Caco-2 (cell line): ENCODE measurements at regions of chr1 and their contacts with region 1.

Region 1: DNA sequence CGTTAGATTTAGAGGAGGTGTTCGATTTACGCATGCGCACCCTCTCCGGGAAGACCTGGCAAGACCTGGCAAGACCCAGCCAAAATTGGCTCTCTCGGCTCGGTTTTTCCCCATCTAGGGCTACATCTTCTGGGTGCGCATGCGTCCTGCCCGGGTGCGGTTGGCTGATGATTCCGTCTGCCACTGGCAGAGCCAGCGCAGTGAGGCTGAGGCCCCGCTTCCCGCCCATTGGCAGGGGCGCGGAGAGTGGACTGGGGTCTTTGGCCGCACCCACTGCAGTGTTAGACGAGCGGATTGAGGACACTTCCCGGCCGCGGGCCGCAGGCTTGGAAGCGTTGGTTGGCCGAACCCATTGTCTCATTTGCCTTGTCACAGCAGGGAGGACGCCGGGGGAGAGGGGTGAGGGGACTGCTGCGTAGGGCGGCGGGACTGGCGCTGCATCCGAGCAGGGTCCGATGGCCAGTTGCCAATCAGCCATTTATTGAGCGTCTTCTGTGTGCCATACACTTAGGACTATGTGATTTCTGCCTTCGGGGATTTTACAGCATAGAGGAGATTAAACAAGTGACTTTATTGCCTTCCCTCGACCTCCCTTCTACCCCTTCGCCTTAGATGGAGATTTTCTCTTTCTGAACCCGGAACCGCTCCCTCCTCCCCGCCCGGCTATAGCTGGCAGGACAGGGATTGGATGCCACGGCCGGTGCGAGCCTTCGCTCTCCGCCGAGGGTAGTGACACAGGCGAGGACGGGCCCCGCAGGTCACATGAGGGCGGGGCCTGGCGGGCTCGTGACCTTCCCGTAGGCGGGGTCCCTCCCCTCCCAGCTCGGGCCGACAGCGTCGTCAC is 43.7 kb downstream of the MEF2D start:
- DNase-seq: peak; percentile 98
- H3K4me3 ChIP-seq: peak overlapping the region; percentile 70
- H3K4me3 Mint-ChIP-seq: peak overlapping the region; percentile 88
- H3K27ac Mint-ChIP-seq: peak overlapping the region; percentile 90
- H3K4me1 ChIP-seq: peaks cover 13% of the 10 kb centered on the region
- H3K4me1 Mint-ChIP-seq: peaks cover 1% of the 10 kb centered on the region
- H3K27me3 ChIP-seq: no peaks in the 10 kb centered on the region
- H3K27me3 Mint-ChIP-seq: no peaks in the 10 kb centered on the region
- CTCF ChIP-seq: no peak

Region 2: DNA sequence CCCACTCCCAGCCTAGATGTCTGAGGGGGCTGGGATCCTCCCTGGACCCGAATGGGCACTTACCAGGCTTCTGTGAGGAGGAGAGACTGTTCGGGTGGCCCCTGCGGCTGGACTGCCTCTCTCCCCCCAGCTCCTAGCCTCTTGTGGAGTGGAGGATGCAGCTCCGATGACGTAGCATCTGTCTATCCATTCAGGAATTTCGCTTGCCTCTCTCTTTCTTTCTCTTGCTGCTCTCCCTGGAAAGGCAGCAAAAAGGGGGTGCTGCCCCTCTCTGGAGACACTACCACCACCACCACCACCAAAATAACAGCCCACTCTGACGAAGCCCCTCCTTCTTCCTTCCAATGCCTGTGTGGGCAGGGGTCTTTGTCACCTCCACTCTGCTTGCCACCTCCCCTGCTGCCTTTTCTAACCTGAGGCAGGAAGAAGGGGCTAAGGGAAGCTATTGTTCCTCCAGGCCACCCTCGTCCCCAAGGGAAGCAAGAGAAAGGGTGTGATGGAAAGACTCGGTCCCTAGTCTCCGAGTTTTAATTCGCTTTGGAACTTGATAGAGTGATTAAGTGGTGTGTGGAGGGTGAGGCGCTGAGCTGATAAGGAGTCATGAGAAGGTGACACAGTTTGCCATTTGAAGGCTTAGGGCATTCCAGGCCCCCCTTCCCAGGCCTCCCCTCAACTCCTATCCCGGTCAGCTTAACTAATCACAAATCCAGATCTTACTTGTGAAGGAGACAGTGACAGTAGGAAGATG is 27.4 kb before region 1 on chr1:
- CTCF ChIA-PET with region 1: no interaction called
- POLR2A ChIA-PET with region 1: no interaction called
- intact Hi-C with region 1: no loop called
- DNase-seq: no peak
- H3K4me3 ChIP-seq: no peak overlapping the region
- H3K4me3 Mint-ChIP-seq: no peak overlapping the region
- H3K27ac Mint-ChIP-seq: no peak overlapping the region
- H3K4me1 ChIP-seq: no peaks in the 10 kb centered on the region
- H3K4me1 Mint-ChIP-seq: no peaks in the 10 kb centered on the region
- H3K27me3 ChIP-seq: peaks cover 2% of the 10 kb centered on the region; the same call in 1 of the 2 replicates
- H3K27me3 Mint-ChIP-seq: peaks cover 39% of the 10 kb centered on the region
- CTCF ChIP-seq: no peak

Region 3: GRCh38 chr1:156471496-156472490 is 14.9 kb after region 1 on chr1:
- CTCF ChIA-PET with region 1: interaction called, 9 read pairs
- POLR2A ChIA-PET with region 1: interaction called, 8 read pairs
- intact Hi-C with region 1: loop called (anchors 1 kb)
- DNase-seq: peak; percentile 49 to 53
- H3K4me3 ChIP-seq: no peak overlapping the region
- H3K4me3 Mint-ChIP-seq: no peak overlapping the region
- H3K27ac Mint-ChIP-seq: peak overlapping the region; percentile 69
- H3K4me1 ChIP-seq: peaks cover 8% of the 10 kb centered on the region
- H3K4me1 Mint-ChIP-seq: no peaks in the 10 kb centered on the region
- H3K27me3 ChIP-seq: no peaks in the 10 kb centered on the region
- H3K27me3 Mint-ChIP-seq: no peaks in the 10 kb centered on the region
- CTCF ChIP-seq: no peak

Region 4: DNA sequence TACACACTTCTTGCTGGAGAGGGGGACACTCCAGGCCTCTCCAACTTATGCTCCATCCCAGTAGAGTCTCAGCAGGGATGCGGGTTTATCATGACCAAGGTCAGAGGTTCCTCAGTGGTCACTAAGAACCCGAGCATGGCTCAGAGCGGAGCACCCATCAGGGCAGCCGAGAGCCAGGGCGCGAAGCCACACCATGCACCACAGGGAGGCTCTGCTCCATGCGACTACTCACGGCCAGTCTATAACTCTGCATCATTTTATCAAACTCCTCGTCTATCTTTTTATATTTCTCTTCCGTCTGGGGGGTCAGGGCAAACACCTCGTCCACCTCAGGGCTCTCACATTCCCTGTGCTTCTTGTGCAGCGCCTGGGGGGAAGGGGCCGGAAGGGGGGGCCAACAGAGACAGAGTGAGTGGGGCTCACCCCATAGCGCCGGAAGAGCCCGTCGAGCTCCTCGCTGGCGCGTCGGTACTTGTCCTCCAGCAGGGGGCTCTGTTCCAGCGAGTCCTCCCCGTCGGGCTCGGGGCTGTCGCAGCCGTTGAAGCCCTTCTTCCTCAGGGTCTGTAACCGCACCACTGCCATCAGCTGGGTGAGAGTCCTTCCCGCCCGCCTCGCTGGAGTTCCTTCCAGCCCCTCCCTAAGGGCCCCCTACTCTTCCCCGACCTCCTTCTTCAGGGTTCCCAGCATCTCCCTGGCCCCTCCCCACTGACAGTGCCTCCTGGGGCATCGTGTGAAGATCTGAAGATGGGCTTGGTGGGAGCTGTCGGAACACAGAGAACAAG is 23.8 kb after region 1 on chr1:
- CTCF ChIA-PET with region 1: interaction called, 9 read pairs
- POLR2A ChIA-PET with region 1: no interaction called
- intact Hi-C with region 1: loop called (anchors 2 kb)
- DNase-seq: peak in 1 of 2 experiments; percentile 52
- H3K4me3 ChIP-seq: no peak overlapping the region
- H3K4me3 Mint-ChIP-seq: no peak overlapping the region
- H3K27ac Mint-ChIP-seq: no peak overlapping the region
- H3K4me1 ChIP-seq: no peaks in the 10 kb centered on the region
- H3K4me1 Mint-ChIP-seq: no peaks in the 10 kb centered on the region
- H3K27me3 ChIP-seq: no peaks in the 10 kb centered on the region
- H3K27me3 Mint-ChIP-seq: no peaks in the 10 kb centered on the region
- CTCF ChIP-seq: peak; percentile 63 to 68

Region 5: DNA sequence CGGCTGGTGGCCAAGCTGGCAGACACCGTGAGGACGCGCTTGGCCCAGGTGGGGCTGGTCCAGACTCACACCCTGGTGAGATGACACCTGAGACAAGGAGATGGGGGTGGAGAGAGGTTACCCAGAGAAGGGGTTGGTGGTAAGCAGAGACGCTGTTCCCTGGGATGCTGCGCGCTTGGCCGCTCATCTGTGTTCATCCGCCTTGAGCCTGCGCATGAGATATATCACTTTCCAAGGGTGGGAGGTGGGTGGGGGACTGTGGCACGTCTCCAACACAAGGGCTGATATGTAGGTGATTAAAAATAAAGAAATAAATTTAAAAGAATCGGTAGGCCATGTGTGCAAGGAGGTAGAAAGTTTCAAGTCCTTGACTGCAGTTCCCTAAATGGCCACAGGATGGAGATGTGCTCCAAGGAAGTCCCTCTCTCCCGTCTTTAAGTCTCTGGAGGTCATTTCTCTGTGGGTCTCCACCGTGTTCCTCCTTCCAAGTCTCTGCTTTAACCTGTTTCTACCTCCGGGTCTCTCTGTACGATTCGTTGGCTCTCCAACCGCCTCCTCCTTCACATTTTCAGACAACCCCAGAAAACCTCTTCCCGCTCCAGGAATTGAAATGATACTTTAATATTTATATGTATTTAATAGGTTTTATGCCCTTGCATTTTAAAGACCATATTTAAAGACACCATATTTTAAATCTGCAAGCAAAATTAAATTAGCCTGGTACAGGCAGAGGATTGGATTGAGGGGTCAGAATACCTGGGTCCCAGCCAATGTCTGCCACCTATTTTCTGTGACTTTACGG is 127.2 kb after region 1 on chr1:
- CTCF ChIA-PET with region 1: interaction called, 4 read pairs
- POLR2A ChIA-PET with region 1: no interaction called
- intact Hi-C with region 1: loop called (anchors 5 kb)
- DNase-seq: peak; percentile 75 to 78
- H3K4me3 ChIP-seq: no peak overlapping the region
- H3K4me3 Mint-ChIP-seq: no peak overlapping the region
- H3K27ac Mint-ChIP-seq: no peak overlapping the region
- H3K4me1 ChIP-seq: no peaks in the 10 kb centered on the region
- H3K4me1 Mint-ChIP-seq: no peaks in the 10 kb centered on the region
- H3K27me3 ChIP-seq: no peaks in the 10 kb centered on the region
- H3K27me3 Mint-ChIP-seq: no peaks in the 10 kb centered on the region
- CTCF ChIP-seq: peak; percentile 83 to 89

Region 6: GRCh38 chr1:156608036-156608674 is 151.3 kb after region 1 on chr1:
- CTCF ChIA-PET with region 1: interaction called, 9 read pairs
- POLR2A ChIA-PET with region 1: no interaction called
- intact Hi-C with region 1: loop called (anchors 1 kb)
- DNase-seq: peak; percentile 71 to 78
- H3K4me3 ChIP-seq: no peak overlapping the region
- H3K4me3 Mint-ChIP-seq: no peak overlapping the region
- H3K27ac Mint-ChIP-seq: no peak overlapping the region
- H3K4me1 ChIP-seq: 0 out of 2 replicates have a peak, but pooled peaks cover 4% of the 10 kb centered on the region
- H3K4me1 Mint-ChIP-seq: peaks cover 16% of the 10 kb centered on the region
- H3K27me3 ChIP-seq: no peaks in the 10 kb centered on the region
- H3K27me3 Mint-ChIP-seq: no peaks in the 10 kb centered on the region
- CTCF ChIP-seq: peak; percentile 82 to 83